Prostate gland (tissue), 2 donors: ENCODE measurements at regions of chrX and their contacts with region 1.

Region 1: DNA sequence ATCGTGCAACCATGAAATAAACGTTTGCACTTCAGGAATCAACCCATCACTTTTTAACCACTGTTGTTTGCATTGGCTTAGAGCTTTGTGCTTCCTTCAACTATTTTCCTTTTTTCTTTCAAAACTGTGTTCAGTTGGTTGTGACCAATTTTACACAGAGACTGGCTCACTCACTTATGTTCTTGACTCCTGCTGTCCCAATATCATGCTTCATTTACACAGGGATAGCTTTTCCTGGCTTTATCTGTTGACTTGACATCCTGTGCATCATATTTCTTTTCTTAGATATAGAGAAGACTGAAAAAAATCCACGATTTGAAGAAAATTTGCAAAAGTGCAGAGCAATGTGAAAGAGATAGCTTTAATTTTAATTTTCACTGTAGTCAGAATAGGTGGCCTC is 38.8 kb downstream of the REPS2 start:
- DNase-seq: no peak
- H3K4me3 ChIP-seq: no peak overlapping the region
- H3K27ac ChIP-seq: no peak overlapping the region
- H3K4me1 ChIP-seq: no peaks in the 10 kb centered on the region
- H3K27me3 ChIP-seq: no peaks in the 10 kb centered on the region
- CTCF ChIP-seq: no peak
- POLR2A ChIP-seq: no peak

Region 2: DNA sequence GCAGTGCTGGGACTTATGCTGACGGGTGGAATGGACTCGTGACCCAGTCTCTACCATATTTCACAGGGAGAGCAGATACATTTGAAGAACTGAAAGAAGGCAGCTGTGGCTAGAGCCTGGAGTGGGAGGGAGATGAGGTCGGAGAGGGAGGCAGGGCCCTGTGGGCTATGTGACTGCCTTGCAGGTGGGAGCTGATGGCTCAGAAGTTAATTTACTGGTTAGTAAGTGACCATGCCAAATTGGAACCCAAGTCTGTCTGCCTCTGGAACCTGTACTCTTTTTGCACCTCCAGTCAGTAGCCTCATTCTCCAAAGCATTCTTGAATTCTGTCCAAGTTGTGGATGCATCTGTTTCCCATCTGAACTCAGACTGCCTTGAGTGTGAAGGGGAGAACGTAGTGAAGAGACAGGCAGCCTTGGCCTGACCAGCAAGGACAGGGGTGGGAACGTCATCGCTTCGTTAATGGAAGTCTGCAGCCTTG is 53.4 kb after region 1 on chrX:
- intact Hi-C with region 1: loop called (anchors 10 kb)
- DNase-seq: no peak
- H3K4me3 ChIP-seq: no peak overlapping the region
- H3K27ac ChIP-seq: no peak overlapping the region
- H3K4me1 ChIP-seq: no peaks in the 10 kb centered on the region
- H3K27me3 ChIP-seq: no peaks in the 10 kb centered on the region
- CTCF ChIP-seq: no peak
- POLR2A ChIP-seq: no peak